GM12878 (cell line): ENCODE measurements at regions of chr2 and their contacts with region 1.

Region 1: GRCh38 chr2:74919827-74920226 is 38.6 kb upstream of the POLE4 start:
- DNase-seq: no peak
- ATAC-seq: peak; percentile 77
- H3K4me3 ChIP-seq: no peak overlapping the region
- H3K27ac ChIP-seq: no peak overlapping the region
- H3K4me1 ChIP-seq: peaks cover 6% of the 10 kb centered on the region; the same call in 1 of the 2 replicates
- H3K27me3 ChIP-seq: no peaks in the 10 kb centered on the region
- CTCF ChIP-seq: peak; percentile 69 to 85 (median 84)
- EP300 ChIP-seq: no peak
- POLR2A ChIP-seq: no peak
- RAD21 ChIP-seq: peak; percentile 95

Region 2: GRCh38 chr2:74893332-74893731 is 26.5 kb before region 1 on chr2:
- CTCF ChIA-PET with region 1: no interaction called
- POLR2A ChIA-PET with region 1: no interaction called
- RAD21 ChIA-PET with region 1: no interaction called
- SMC1A ChIA-PET with region 1: no interaction called
- in situ Hi-C with region 1: no loop called
- intact Hi-C with region 1: no loop called
- DNase-seq: no peak
- ATAC-seq: no peak
- H3K4me3 ChIP-seq: no peak overlapping the region
- H3K27ac ChIP-seq: no peak overlapping the region
- H3K4me1 ChIP-seq: no peaks in the 10 kb centered on the region
- H3K27me3 ChIP-seq: no peaks in the 10 kb centered on the region
- CTCF ChIP-seq: no peak
- EP300 ChIP-seq: no peak
- POLR2A ChIP-seq: no peak
- RAD21 ChIP-seq: no peak

Region 3: DNA sequence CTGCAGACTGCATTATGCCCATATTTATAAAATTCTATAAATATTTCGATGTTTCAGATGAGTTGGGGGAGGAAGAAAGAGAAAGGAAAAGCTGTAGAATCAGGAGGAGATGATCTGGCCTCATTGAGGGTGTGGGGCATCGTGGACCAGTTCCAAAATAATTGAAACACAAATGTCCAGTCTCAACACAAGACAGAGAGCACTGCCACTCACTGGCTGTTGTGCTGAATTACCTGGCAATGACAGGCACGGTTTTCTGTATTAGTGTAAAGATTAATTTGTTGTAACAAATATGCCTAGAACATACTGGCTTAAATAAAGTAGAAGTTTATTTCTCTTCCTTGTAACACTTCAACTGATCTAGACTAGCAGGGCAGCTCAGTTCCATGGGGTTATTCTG is 62.8 kb after region 1 on chr2:
- CTCF ChIA-PET with region 1: interaction called, 19 read pairs
- POLR2A ChIA-PET with region 1: no interaction called
- RAD21 ChIA-PET with region 1: interaction called, 3 read pairs
- SMC1A ChIA-PET with region 1: interaction called, 7 read pairs
- in situ Hi-C with region 1: no loop called
- intact Hi-C with region 1: loop called (anchors 2 kb)
- DNase-seq: no peak
- ATAC-seq: peak; percentile 50; the same call in 2 of the 3 replicates
- H3K4me3 ChIP-seq: no peak overlapping the region
- H3K27ac ChIP-seq: no peak overlapping the region
- H3K4me1 ChIP-seq: no peaks in the 10 kb centered on the region
- H3K27me3 ChIP-seq: no peaks in the 10 kb centered on the region
- CTCF ChIP-seq: peak in 2 of 3 experiments; percentile 29 to 40; a peak in 3 of 6 replicates
- EP300 ChIP-seq: no peak
- POLR2A ChIP-seq: no peak
- RAD21 ChIP-seq: peak; percentile 37

Region 4: GRCh38 chr2:75199428-75200011 is 279.7 kb after region 1 on chr2 and contains the start of gene TACR1:
- CTCF ChIA-PET with region 1: interaction called, 4 read pairs
- POLR2A ChIA-PET with region 1: no interaction called
- RAD21 ChIA-PET with region 1: interaction called, 5 read pairs
- SMC1A ChIA-PET with region 1: no interaction called
- in situ Hi-C with region 1: no loop called
- intact Hi-C with region 1: loop called (anchors 10 kb)
- DNase-seq: peak; percentile 35
- ATAC-seq: peak; percentile 91
- H3K4me3 ChIP-seq: peak within 1 kb of the TSS; percentile 57
- H3K27ac ChIP-seq: no peak within 1 kb of the TSS
- H3K4me1 ChIP-seq: peaks cover 4% of the 10 kb centered on the region; the same call in 1 of the 2 replicates
- H3K27me3 ChIP-seq: peaks cover 5 to 11% of the 10 kb centered on the region in 2 experiments
- CTCF ChIP-seq: peak; percentile 56 to 69 (median 64)
- EP300 ChIP-seq: 0 out of 4 replicates have a peak, but pooled peaks of 1 of the 2 experiments have one; percentile 22
- POLR2A ChIP-seq: no peak
- RAD21 ChIP-seq: peak; percentile 73
- polyA plus RNA-seq, gene TACR1: 0.04 to 0.05 TPM